HEK293 (cell line): ENCODE measurements at regions of chr7 and their contacts with region 1.

Region 1: DNA sequence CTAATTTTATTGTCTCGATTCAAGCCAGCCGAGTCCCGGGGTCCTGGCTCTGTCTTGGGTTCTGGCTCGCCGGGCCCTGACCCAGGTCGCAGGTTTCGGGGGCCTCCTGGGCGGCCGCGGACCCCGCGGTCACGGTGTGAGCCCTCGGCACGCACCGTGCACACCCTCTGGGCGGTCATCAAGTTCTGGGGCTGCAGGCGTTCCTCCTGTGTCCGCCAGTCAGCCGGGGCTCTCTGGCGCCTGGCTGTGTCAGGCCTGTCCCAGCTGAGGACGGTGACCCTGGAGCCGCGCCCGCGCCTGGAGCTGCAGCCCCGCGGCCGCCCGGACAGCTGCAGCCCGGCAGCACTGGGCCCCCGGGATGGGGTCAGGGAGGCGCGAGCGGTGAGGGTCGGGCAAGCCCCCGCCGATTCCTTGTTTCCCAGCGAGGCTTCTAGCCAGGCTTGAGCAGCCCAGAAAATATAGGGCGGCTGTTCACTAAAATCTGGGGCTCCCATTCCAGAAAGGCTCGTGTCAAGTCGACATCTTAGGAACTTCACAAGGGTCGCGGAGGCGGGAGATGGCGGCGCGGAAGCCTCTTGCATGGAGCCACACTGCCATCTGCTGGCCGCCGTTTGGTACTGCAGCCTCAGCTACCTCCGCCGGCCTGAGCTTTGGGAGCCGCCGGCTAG is 4.2 kb upstream of the HOXA7 start:
- H3K4me3 ChIP-seq: peak overlapping the region; percentile 46
- H3K27ac ChIP-seq: peak overlapping the region; percentile 100
- H3K4me1 ChIP-seq: peaks cover 12% of the 10 kb centered on the region
- CTCF ChIP-seq: peak; percentile 88

Region 2: GRCh38 chr7:26376175-26376917 is 784.3 kb before region 1 on chr7:
- CTCF ChIA-PET with region 1: interaction called, 18 read pairs
- POLR2A ChIA-PET with region 1: interaction called, 3 read pairs
- H3K4me3 ChIP-seq: peak overlapping the region; percentile 66
- H3K27ac ChIP-seq: peak overlapping the region; percentile 99
- H3K4me1 ChIP-seq: peaks cover 31% of the 10 kb centered on the region
- CTCF ChIP-seq: no peak

Region 3: DNA sequence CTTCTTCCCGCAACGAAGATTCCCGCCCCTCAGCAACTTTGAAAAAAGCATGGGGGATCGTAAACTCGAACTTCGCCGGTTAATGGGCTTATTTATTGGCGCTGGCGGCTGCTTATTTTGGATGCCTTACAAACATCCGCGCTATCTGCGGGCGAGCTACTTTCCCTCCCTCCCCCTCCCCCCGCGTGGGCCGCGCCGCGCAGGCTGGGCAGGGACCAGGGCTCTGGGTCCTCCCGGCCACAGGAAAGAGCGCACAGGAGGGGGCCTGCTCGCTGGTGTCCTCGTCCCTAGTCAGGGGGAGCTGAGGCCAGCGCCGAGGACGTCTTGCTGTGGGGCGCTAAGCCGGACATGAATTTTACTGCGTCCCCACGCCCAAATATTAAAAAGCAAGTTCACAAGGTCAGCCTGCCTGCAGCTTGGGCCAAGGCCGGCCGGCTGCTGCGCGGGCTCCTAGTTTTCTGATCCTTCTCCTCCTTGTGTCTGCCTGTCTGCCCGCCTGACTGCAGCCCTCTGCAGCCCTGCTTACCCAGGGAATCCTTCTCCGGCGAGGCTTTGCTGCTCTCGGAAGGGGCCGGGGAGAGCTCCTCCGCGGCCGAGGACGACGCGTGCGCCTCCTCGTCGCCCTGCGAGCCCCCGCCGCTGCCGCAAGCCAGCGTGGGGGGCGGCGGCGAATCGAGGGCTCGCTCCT is 12.3 kb after region 1 on chr7:
- CTCF ChIA-PET with region 1: interaction called, 10 read pairs
- POLR2A ChIA-PET with region 1: interaction called, 21 read pairs
- H3K4me3 ChIP-seq: peak overlapping the region; percentile 76
- H3K27ac ChIP-seq: peak overlapping the region; percentile 100
- H3K4me1 ChIP-seq: peaks cover 10% of the 10 kb centered on the region
- CTCF ChIP-seq: no peak

Region 4: DNA sequence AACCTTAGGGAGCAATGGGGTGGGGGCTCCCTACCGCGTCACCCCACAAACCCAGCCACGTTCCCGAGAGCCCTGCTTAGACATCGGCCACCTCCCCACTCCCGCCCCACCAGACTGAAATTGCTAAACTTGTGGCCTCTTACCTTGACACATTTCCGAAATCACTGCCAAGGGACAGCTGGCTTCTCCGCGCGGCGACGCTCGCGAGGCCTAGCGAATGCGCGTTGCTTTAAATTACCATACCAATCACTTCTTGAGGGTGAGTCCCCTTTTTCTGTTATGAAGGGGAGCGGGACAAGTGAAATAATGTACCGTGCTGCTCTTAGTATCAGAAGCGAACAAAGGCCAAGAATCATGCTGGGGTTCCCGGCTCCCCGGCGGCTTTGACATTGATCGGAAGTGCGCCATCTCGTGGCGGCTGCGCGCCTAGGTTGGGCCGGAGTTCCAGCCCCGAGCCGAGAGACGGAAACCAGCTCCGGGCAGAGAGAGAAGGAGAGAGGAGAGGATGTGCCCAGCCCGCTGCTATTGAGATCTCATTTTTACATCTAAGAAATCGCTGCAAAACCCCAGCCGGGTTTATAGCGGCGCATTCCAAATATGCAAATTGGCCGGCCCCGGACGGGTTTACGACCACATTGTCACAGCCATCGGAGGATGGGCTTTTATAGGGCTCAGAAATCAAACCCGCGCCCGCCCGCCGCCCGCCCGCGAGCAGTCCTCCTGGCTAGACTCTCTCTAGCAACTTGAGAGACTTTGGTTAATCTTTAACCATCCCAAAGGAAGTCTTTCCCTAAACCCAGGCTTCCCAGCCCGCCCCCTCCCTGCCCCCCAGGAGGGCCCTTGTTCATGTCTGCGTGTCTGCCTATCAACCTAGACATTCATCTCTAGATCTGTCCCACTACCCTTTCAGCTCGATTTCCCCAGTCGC is 19.1 kb after region 1 on chr7:
- CTCF ChIA-PET with region 1: interaction called, 10 read pairs
- POLR2A ChIA-PET with region 1: interaction called, 21 read pairs
- H3K4me3 ChIP-seq: peak overlapping the region; percentile 76
- H3K27ac ChIP-seq: peak overlapping the region; percentile 99
- H3K4me1 ChIP-seq: peaks cover 36% of the 10 kb centered on the region
- CTCF ChIP-seq: peak; percentile 83